ENCODE measurements at regions of chr9 and their contacts with region 1.

Region 1: GRCh38 chr9:33024966-33025571 is at the start of gene DNAJA1:
- DNase-seq: peak; percentile 93
- H3K4me3 Mint-ChIP-seq: peak within 1 kb of the TSS; percentile 90
- H3K27ac Mint-ChIP-seq: peak within 1 kb of the TSS; percentile 96
- H3K4me1 Mint-ChIP-seq: peaks cover 53% of the 10 kb centered on the region
- H3K27me3 Mint-ChIP-seq: no peaks in the 10 kb centered on the region
- total RNA-seq, gene DNAJA1: 257 and 259 TPM in 2 replicates

Region 2: DNA sequence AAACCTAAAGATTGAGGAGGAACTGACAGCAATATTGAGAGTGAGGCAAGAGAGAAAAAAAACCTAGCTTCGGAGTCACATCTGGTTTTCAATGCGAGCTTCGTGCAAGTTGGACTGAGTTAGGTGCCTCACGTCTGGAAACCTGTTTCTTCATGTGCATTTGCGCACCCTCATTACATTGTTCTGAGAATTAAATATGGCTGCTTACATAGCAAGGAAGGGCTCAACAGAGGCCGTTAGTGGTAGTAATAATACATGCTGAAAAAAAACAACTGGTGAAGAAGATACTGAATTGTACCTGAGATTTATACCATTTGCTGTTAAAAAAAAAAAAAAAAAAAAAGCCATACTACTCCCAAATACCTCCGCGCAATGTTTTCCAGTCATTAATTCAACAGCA is 18.6 kb after region 1 on chr9:
- intact Hi-C with region 1: loop called (anchors 2 kb)
- DNase-seq: no peak
- H3K4me3 Mint-ChIP-seq: peak overlapping the region; percentile 76
- H3K27ac Mint-ChIP-seq: peak overlapping the region; percentile 68
- H3K4me1 Mint-ChIP-seq: peaks cover 13% of the 10 kb centered on the region
- H3K27me3 Mint-ChIP-seq: no peaks in the 10 kb centered on the region

Region 3: GRCh38 chr9:33264473-33265177 is 239.6 kb after region 1 on chr9 and contains the starts of genes BAG1 and CHMP5:
- intact Hi-C with region 1: loop called (anchors 1 kb)
- DNase-seq: peak; percentile 100
- H3K4me3 Mint-ChIP-seq: peak within 1 kb of the TSS; percentile 98
- H3K27ac Mint-ChIP-seq: peak within 1 kb of the TSS; percentile 96
- H3K4me1 Mint-ChIP-seq: peaks cover 43% of the 10 kb centered on the region
- H3K27me3 Mint-ChIP-seq: no peaks in the 10 kb centered on the region
- total RNA-seq, gene BAG1: 62.0 and 68.9 TPM in 2 replicates
- total RNA-seq, gene CHMP5: 54.5 and 57.6 TPM in 2 replicates

Measured in activated T-helper 2 cell treated with anti-CD3 and anti-CD28 coated beads, Interferon-gamma antibody, Interleukin-2, Interleukin-4, amounts not matched to agents 10 μg/mL and 5 μg/mL and 100 μg/mL, durations not matched to agents 14 hours and 24 hours and 36 hours (primary cell).